Activated naive CD4-positive, alpha-beta T cell treated with anti-CD3 and anti-CD28 coated beads for 36 hours (primary cell): ENCODE measurements at regions of chr2 and their contacts with region 1.

Region 1: DNA sequence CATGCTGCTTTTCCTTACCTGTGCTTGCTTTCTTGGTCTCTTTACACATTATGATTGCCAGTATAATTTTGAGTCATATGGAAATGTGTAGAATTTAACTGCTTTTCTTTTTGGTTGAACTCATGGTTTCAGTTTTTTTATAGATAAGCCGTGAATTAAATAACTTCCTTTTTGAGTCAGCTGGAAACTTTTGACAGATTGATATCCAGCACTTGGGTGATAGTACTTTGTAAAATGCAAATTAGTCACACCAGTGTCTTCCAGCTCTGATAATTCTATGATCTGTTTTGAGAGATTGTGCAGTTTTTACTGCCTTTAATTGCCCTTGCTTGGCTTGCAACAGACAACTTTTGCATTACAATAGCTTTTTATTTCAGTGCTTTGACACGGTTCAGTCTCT is 86.4 kb downstream of the NCOA1 start:
- DNase-seq: no peak
- H3K4me3 Mint-ChIP-seq: no peak overlapping the region
- H3K27ac Mint-ChIP-seq: peak overlapping the region; percentile 69
- H3K4me1 Mint-ChIP-seq: peaks cover 74% of the 10 kb centered on the region
- H3K27me3 Mint-ChIP-seq: no peaks in the 10 kb centered on the region

Region 2: GRCh38 chr2:24429197-24430074 is 148.0 kb before region 1 on chr2:
- CTCF ChIA-PET with region 1: no interaction called
- intact Hi-C with region 1: no loop called
- DNase-seq: no peak
- H3K4me3 Mint-ChIP-seq: no peak overlapping the region
- H3K27ac Mint-ChIP-seq: no peak overlapping the region
- H3K4me1 Mint-ChIP-seq: no peaks in the 10 kb centered on the region
- H3K27me3 Mint-ChIP-seq: no peaks in the 10 kb centered on the region

Region 3: GRCh38 chr2:24521975-24522639 is 55.4 kb before region 1 on chr2:
- CTCF ChIA-PET with region 1: no interaction called
- intact Hi-C with region 1: loop called (anchors 1 kb)
- DNase-seq: no peak
- H3K4me3 Mint-ChIP-seq: no peak overlapping the region
- H3K27ac Mint-ChIP-seq: peak overlapping the region; percentile 71
- H3K4me1 Mint-ChIP-seq: peaks cover 38% of the 10 kb centered on the region
- H3K27me3 Mint-ChIP-seq: no peaks in the 10 kb centered on the region

Region 4: DNA sequence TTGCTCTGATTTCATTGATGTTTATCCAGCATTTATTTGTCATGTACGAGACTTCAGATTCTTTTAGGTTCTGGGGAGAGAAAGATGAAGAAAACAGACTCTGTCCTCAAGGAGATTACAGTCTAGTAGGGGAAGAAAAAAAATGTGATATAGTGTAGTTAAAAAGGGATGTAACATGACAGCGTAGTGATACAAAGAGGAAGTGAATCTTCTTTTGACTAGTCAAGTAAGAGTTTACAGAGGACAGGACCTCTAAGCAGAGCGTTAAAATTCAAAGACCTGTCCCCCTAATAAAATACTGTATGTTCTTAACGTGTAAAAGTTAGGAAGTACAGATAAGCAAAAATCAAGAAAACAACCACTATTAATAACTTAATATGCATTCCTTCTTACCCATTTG is 38.8 kb before region 1 on chr2:
- CTCF ChIA-PET with region 1: no interaction called
- intact Hi-C with region 1: no loop called
- DNase-seq: no peak
- H3K4me3 Mint-ChIP-seq: no peak overlapping the region
- H3K27ac Mint-ChIP-seq: no peak overlapping the region
- H3K4me1 Mint-ChIP-seq: peaks cover 23% of the 10 kb centered on the region
- H3K27me3 Mint-ChIP-seq: no peaks in the 10 kb centered on the region

Region 5: GRCh38 chr2:24626131-24626530 is 48.6 kb after region 1 on chr2:
- CTCF ChIA-PET with region 1: no interaction called
- intact Hi-C with region 1: loop called (anchors 5 kb)
- DNase-seq: no peak
- H3K4me3 Mint-ChIP-seq: no peak overlapping the region
- H3K27ac Mint-ChIP-seq: no peak overlapping the region
- H3K4me1 Mint-ChIP-seq: peaks cover 27% of the 10 kb centered on the region
- H3K27me3 Mint-ChIP-seq: no peaks in the 10 kb centered on the region

Region 6: DNA sequence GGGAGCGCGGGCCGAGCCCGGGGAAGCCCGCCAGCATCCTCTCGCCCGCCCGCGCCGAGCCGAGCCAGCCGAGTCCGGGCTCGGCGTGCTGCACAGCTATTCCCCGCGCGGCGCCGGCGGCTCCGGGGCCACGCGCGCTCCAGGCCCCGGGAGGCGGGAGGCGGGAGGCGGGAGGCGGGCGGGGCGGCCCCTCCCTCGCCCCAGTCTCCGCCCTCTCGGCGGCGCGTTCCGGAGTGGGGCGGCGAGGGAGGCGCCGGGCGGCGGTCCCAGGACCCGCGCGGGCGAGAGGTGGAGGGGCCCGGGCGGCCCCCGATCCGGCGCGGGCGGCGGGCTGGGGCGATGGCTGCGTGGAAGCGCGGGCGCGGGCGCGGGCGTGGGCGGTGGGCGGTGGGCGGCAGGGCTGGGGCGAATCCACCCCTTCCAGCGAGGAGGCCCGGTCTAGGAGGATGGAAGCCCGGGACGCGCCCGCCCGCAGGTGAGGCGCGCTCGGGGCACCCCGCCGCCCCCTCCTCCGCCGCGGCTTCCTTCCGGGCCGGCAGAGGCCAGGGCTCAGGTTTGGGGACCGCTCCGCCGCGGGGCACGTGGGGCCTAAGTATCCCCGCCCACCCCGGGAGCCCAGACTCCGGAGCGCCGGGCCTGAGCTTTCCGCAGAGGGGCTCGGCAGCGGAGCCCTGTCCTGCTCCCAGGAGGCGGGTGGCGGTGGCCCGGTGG is 342.8 kb after region 1 on chr2 and contains the start of gene ADCY3:
- CTCF ChIA-PET with region 1: no interaction called
- intact Hi-C with region 1: loop called (anchors 10 kb)
- DNase-seq: peak; percentile 64
- H3K4me3 Mint-ChIP-seq: peak within 1 kb of the TSS; percentile 95
- H3K27ac Mint-ChIP-seq: peak within 1 kb of the TSS; percentile 86
- H3K4me1 Mint-ChIP-seq: peaks cover 30% of the 10 kb centered on the region
- H3K27me3 Mint-ChIP-seq: no peaks in the 10 kb centered on the region
- total RNA-seq, gene ADCY3: 44.8 to 49.9 TPM

Region 7: DNA sequence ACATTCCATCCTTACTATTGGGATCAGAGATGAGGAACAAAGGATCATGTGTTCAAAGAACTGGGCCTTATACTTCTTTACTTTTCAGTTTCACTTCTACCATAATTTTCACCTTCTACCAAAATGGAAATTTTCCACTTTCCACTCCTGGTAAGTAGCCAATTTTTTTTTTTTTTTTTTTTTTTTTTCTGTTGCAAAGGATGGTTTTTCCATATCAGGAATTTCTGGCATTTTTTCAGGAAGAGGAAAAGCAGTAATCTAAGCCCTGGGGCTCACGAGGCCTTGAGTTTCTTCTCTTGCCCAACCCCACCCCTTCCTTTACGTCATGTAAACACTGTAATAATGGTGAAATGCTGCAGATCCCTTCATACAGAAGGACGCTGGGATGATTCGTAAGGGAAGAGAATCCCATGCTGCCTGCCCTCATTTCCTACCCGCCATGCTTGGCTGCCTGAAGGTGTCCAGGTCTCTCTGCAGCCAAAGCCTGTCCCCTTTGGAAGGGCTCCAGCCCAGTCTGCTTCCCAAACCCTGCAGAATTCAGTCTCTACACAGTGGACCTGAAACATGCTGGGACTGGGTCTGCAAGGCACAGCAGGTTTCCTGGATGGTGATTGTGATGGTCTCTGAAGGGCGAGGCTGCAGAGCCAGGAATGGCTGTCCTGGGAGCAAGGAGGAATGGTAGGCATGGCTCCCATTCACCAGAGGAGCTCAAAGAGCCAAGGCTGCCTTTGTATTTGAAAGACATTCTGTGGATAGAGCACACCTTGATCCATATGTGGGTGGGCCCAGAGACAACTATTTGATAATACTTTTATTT is 521.4 kb after region 1 on chr2:
- CTCF ChIA-PET with region 1: no interaction called
- intact Hi-C with region 1: loop called (anchors 1 kb)
- DNase-seq: no peak
- H3K4me3 Mint-ChIP-seq: no peak overlapping the region
- H3K27ac Mint-ChIP-seq: no peak overlapping the region
- H3K4me1 Mint-ChIP-seq: peaks cover 17% of the 10 kb centered on the region
- H3K27me3 Mint-ChIP-seq: peaks cover 3% of the 10 kb centered on the region